ENCODE measurements at regions of chr1 and their contacts with region 1.

Region 1: DNA sequence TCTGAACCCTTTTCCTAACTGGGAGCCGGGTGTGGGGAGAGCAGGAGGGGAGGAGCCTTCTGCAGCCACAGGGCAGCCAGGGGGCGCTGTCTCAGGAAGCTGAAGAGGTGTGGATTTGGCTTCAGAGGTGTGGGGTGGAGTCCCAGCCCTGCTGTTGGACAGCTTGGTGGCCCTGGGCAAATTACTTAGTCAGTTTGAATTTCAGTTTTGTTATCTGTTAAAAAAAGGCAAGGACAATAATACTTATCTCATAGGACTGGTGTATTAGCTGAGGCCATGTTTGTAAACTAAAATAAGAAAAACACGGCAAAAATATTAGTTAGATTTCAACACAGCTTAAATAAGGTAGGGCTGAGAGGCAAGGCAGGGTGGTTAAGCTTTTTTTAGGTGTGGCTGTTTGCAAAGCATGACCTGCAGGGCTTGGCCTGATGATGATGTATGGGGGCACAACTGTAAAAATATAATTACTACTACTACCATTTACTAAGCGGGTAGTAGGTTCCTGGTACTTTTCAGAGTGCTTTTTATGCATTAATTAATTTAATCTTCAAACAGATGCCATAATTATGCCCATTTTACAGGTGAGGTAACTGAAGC is 111.8 kb downstream of the PLXNA2 start:
- DNase-seq: peak; percentile 92
- ATAC-seq: peak; percentile 90
- H3K4me3 Mint-ChIP-seq: peak overlapping the region; percentile 55
- H3K27ac Mint-ChIP-seq: no peak overlapping the region
- H3K4me1 Mint-ChIP-seq: peaks cover 63% of the 10 kb centered on the region
- H3K27me3 Mint-ChIP-seq: peaks cover 20% of the 10 kb centered on the region
- CTCF ChIP-seq: peak; percentile 87

Region 2: DNA sequence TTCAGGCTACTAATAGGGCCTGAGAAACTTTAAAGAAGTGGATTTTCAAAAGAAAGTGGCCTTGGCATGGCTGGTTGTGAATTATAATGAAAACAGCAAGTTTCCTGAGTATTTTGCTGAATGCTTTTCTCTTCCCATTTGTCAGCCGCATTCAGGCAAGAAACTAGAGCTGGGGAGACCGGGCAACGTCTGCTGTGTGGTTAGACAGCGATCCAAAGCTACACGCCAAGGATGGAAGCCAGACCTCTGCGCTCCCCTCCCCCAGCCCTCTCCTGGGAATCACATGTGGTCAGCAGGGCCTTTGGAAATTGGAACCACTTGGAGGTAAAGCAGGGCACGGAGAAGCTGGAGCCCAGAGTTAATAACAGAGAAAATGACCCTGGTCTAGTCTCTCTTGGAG is 107.4 kb before region 1 on chr1:
- CTCF ChIA-PET with region 1: interaction called, 61 read pairs
- POLR2A ChIA-PET with region 1: no interaction called
- DNase-seq: no peak
- ATAC-seq: no peak
- H3K4me3 Mint-ChIP-seq: no peak overlapping the region
- H3K27ac Mint-ChIP-seq: no peak overlapping the region
- H3K4me1 Mint-ChIP-seq: peaks cover 12% of the 10 kb centered on the region
- H3K27me3 Mint-ChIP-seq: 0 out of 2 replicates have a peak, but pooled peaks cover 3% of the 10 kb centered on the region
- CTCF ChIP-seq: no peak

Region 3: GRCh38 chr1:208059409-208059995 is 72.9 kb before region 1 on chr1:
- CTCF ChIA-PET with region 1: no interaction called
- POLR2A ChIA-PET with region 1: no interaction called
- DNase-seq: no peak
- ATAC-seq: no peak
- H3K4me3 Mint-ChIP-seq: no peak overlapping the region
- H3K27ac Mint-ChIP-seq: no peak overlapping the region
- H3K4me1 Mint-ChIP-seq: peaks cover 13% of the 10 kb centered on the region
- H3K27me3 Mint-ChIP-seq: no peaks in the 10 kb centered on the region
- CTCF ChIP-seq: no peak

Region 4: DNA sequence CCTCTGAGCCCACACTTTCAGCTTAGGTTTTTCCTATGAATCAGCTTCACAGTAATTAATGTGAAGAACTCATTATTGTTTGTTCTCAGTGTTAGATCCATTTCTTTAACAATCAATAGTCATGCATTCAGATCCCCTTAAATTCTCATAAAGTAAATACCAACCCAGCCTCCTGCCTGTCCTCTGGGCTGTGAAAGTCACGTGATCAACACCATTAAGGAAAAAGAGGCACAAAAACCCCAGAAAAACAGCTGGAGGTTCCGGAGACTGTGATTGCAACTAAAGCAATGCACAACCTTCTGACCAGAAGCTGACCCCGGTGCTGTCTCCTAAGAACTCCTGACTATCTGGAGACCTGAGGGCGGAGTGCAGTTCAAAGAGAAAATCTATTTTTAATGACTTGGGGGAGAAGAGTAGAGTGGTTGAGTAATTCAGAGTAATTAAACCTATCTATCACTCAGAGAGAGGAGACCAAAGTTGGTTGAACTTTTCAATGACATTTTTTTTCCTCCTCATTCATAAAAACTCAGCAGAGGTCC is 20.7 kb before region 1 on chr1:
- CTCF ChIA-PET with region 1: interaction called, 19 read pairs
- POLR2A ChIA-PET with region 1: no interaction called
- DNase-seq: no peak
- ATAC-seq: no peak
- H3K4me3 Mint-ChIP-seq: no peak overlapping the region
- H3K27ac Mint-ChIP-seq: no peak overlapping the region
- H3K4me1 Mint-ChIP-seq: peaks cover 33% of the 10 kb centered on the region
- H3K27me3 Mint-ChIP-seq: no peaks in the 10 kb centered on the region
- CTCF ChIP-seq: no peak

Region 5: DNA sequence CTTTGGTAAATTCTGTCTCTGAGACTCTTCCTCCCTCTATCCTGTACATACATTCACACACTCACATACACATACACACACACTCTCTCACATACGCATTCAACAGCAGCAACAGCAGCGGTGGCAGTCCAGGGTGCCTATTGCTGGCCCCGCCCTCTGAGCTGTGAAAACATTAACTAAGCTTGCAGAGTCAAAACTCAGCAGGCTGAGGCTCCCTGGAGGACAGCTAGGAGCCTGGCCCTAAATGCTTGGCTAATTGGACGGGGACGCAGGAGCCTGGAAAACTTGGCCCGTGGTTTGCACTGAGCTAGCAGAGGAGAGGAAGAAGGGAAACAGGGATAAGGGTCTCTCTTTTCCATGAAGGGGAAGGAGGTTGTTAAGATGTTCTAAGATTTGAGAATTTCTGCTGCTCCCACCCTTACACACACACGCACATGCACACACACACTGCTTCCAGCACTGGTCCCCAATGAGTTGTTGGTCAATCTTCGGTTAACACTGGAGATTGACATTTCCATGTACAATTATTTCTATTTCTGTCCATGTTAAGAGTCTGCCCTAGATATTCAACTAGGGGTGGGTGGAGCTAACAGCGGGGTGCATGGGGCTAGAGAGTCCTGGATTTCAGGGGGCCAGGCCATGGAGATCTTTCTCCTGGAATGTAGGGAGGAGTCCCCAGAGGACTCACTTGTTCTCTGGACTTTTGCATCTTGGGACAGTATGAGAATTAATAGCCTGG is 17.6 kb after region 1 on chr1:
- CTCF ChIA-PET with region 1: interaction called, 33 read pairs
- POLR2A ChIA-PET with region 1: interaction called, 3 read pairs
- DNase-seq: no peak
- ATAC-seq: peak; percentile 62
- H3K4me3 Mint-ChIP-seq: no peak overlapping the region
- H3K27ac Mint-ChIP-seq: no peak overlapping the region
- H3K4me1 Mint-ChIP-seq: peaks cover 12% of the 10 kb centered on the region
- H3K27me3 Mint-ChIP-seq: no peaks in the 10 kb centered on the region
- CTCF ChIP-seq: no peak

Region 6: GRCh38 chr1:208165659-208166058 is 33.3 kb after region 1 on chr1:
- CTCF ChIA-PET with region 1: interaction called, 42 read pairs
- POLR2A ChIA-PET with region 1: no interaction called
- DNase-seq: no peak
- ATAC-seq: no peak
- H3K4me3 Mint-ChIP-seq: no peak overlapping the region
- H3K27ac Mint-ChIP-seq: no peak overlapping the region
- H3K4me1 Mint-ChIP-seq: peaks cover 55% of the 10 kb centered on the region
- H3K27me3 Mint-ChIP-seq: no peaks in the 10 kb centered on the region; the same call in 1 of the 2 replicates
- CTCF ChIP-seq: no peak

Region 7: GRCh38 chr1:208184088-208184911 is 51.9 kb after region 1 on chr1:
- CTCF ChIA-PET with region 1: interaction called, 30 read pairs
- POLR2A ChIA-PET with region 1: no interaction called
- DNase-seq: no peak
- ATAC-seq: no peak
- H3K4me3 Mint-ChIP-seq: no peak overlapping the region
- H3K27ac Mint-ChIP-seq: no peak overlapping the region
- H3K4me1 Mint-ChIP-seq: peaks cover 24% of the 10 kb centered on the region
- H3K27me3 Mint-ChIP-seq: no peaks in the 10 kb centered on the region
- CTCF ChIP-seq: no peak

Region 8: GRCh38 chr1:208238710-208239472 is 106.5 kb after region 1 on chr1:
- CTCF ChIA-PET with region 1: interaction called, 78 read pairs
- POLR2A ChIA-PET with region 1: interaction called, 3 read pairs
- DNase-seq: peak; percentile 51
- ATAC-seq: peak; percentile 69
- H3K4me3 Mint-ChIP-seq: no peak overlapping the region
- H3K27ac Mint-ChIP-seq: no peak overlapping the region
- H3K4me1 Mint-ChIP-seq: peaks cover 47% of the 10 kb centered on the region
- H3K27me3 Mint-ChIP-seq: peaks cover 31% of the 10 kb centered on the region
- CTCF ChIP-seq: peak; percentile 64

Region 9: GRCh38 chr1:208381481-208381880 is 249.1 kb after region 1 on chr1:
- CTCF ChIA-PET with region 1: no interaction called
- POLR2A ChIA-PET with region 1: no interaction called
- DNase-seq: no peak
- ATAC-seq: no peak
- H3K4me3 Mint-ChIP-seq: no peak overlapping the region
- H3K27ac Mint-ChIP-seq: no peak overlapping the region
- H3K4me1 Mint-ChIP-seq: no peaks in the 10 kb centered on the region
- H3K27me3 Mint-ChIP-seq: no peaks in the 10 kb centered on the region
- CTCF ChIP-seq: no peak